ENCODE measurements at regions of chr16 and their contacts with region 1.

Region 1: DNA sequence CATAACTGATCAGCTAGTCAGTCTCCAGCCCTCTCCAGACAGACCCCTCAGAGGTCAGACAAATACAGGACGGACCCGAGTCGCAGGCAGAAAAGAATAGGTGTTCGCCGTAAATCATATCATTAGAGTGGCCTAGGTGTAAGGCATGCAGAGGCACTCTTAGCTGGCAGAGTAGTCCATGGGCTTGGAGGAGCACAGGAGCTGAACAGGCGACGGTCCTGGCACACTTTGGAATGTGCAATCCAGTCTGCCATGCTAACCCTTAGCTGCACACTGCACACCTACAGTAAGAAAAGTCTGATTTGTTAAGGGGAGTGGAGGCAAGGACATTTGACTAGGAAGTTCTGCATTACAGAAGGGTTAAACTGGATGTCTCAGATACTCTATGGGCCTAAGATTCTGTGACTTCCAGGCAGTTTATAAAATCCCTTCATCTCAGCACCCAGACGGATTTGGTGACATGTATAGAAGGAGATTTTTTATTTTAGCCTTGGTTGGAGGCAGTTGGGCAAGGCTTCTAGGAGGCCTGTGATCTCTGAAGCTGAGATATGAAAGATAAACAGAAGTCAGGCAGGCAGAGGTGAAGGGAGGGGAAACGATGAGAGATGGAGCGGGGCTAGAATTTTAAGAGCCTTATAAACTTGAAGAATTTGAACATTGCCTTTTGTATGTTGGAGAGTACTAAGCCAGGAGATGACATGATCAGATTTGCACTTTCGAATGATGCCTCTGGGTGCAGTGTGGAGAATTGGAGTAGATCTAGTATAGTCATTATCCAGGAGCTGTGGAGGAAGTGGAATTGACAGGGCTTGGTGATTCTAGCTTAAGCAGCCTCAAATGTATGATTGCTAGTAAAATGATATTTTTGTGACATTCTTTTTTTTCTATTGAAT is 34.6 kb upstream of the SLC5A11 start:
- DNase-seq: no peak
- H3K4me3 ChIP-seq: no peak overlapping the region
- H3K27ac ChIP-seq: no peak overlapping the region
- H3K4me1 ChIP-seq: peaks cover 4% of the 10 kb centered on the region
- H3K27me3 ChIP-seq: no peaks in the 10 kb centered on the region
- CTCF ChIP-seq: no peak
- EP300 ChIP-seq: no peak
- POLR2A ChIP-seq: no peak

Region 2: DNA sequence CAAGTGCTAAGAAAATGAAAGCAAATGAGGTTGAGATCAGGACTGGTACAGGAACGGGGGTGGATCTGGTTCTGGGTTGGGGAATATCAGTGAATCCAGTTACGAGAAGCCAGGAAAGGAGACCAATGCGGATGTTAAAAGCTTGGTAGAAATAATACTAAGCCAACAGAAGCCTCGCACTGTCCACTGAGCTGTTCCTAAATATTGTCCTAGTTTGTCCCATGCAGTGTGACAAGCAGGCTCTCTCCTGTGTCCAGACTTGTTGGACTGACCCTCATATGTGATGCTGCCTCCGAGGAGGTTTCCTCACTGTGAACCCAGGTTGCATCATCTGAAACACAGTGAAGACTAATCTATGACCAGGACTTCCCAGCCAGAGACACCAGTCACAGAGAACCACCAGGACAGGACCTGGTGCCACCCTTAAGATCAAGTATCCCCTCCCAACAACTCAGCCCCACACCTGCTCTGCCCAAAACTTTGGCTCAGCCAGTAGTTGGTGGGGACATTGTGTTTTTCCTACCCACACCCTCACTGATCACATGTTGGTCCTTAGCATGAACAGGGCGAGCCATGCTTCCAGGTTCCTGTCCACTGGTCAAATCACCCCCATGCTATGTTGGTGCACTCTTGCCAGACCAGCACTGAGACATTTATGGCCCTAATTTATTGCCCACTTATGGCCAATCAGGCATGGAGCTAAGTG is 1541.8 kb before region 1 on chr16:
- intact Hi-C with region 1: no loop called
- DNase-seq: no peak
- H3K4me3 ChIP-seq: no peak overlapping the region
- H3K27ac ChIP-seq: no peak overlapping the region
- H3K4me1 ChIP-seq: no peaks in the 10 kb centered on the region
- H3K27me3 ChIP-seq: no peaks in the 10 kb centered on the region
- CTCF ChIP-seq: no peak
- EP300 ChIP-seq: no peak
- POLR2A ChIP-seq: no peak

Region 3: GRCh38 chr16:24577167-24577566 is 234.0 kb before region 1 on chr16:
- intact Hi-C with region 1: loop called in 1 of 4 experiments (anchors 10 kb)
- DNase-seq: no peak
- H3K4me3 ChIP-seq: no peak overlapping the region
- H3K27ac ChIP-seq: no peak overlapping the region
- H3K4me1 ChIP-seq: no peaks in the 10 kb centered on the region
- H3K27me3 ChIP-seq: no peaks in the 10 kb centered on the region
- CTCF ChIP-seq: no peak
- EP300 ChIP-seq: no peak
- POLR2A ChIP-seq: no peak

Region 4: DNA sequence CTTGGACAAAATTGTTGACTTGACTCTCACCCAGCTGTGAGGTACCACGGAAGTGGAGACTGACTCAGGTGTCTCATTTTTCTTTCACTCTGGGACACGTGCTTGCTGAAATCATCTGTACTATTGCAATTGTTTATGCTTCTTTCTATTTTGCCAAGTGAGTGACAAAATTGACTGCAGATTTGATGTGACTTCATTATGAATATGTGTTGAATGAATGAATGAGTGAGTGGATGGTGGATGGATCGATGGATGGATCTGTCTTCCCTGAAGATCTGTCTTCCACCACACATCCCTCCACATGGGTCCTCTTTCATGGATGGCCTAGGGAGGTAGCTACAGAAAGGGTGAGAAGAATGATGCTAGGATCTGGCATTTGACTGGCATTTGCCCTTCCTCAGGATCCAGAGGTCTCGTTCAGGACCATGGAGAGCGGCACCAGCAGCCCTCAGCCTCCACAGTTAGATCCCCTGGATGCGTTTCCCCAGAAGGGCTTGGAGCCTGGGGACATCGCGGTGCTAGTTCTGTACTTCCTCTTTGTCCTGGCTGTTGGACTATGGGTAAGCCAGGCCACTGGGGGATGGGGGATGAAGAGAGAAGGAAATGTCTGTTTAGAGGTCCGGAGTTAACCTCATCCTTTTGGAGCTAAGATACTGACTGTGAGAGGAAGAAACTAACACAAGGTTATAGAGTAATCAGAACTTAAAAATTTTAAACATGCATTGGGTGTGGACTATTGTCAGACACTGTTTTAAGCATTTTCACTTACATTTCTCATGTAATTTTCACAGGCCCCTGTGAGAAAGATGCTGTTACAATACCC is 47.2 kb after region 1 on chr16:
- intact Hi-C with region 1: no loop called
- DNase-seq: peak; percentile 36 to 60 (median 55)
- H3K4me3 ChIP-seq: no peak overlapping the region
- H3K27ac ChIP-seq: no peak overlapping the region
- H3K4me1 ChIP-seq: peaks cover 4% of the 10 kb centered on the region
- H3K27me3 ChIP-seq: no peaks in the 10 kb centered on the region
- CTCF ChIP-seq: no peak
- EP300 ChIP-seq: no peak
- POLR2A ChIP-seq: no peak